ENCODE measurements at regions of chr3 and their contacts with region 1.

Region 1: GRCh38 chr3:79488407-79488806 is 279.4 kb downstream of the ROBO1 start:
- DNase-seq: no peak

Region 2: GRCh38 chr3:79406175-79406574 is 82.2 kb before region 1 on chr3:
- intact Hi-C with region 1: no loop called
- DNase-seq: no peak

Region 3: DNA sequence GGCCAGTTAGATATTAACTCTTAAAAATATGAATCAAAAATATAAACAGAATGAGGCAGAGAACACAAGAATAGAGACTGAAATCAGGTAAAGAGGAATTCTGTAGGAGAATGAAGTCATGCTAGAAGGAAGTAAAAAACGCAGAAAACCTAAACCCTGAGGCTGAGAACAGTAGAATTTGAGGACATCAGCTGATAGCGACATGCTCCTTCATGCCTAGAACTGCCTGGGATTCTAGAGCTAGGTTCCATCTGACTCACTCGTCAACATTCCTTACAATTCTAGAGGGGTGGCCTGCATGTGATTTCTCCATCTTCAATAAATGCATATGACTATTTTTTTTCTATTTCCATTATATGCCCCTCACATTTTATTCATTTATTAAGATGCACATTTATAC is 63.6 kb before region 1 on chr3:
- intact Hi-C with region 1: no loop called
- DNase-seq: no peak

Region 4: DNA sequence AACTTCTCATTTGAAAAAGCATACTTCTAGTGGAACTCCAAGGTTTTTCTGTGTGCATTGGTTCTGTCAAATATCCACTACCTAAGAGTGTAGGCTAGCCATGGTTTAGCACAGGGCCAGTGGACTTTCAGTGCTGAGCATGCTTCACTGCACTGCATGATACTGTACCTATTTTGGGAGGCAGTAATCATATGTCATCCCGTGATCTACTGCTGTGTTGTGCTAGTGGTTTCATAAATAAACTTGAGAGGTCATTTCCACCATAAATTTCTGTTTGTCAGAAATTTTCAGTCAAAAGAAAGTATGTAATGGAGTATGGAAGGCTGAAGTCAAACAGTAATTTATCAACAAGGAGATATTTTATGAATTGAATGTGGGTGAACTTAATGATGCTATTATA is 75.8 kb after region 1 on chr3:
- intact Hi-C with region 1: no loop called
- DNase-seq: no peak

Region 5: DNA sequence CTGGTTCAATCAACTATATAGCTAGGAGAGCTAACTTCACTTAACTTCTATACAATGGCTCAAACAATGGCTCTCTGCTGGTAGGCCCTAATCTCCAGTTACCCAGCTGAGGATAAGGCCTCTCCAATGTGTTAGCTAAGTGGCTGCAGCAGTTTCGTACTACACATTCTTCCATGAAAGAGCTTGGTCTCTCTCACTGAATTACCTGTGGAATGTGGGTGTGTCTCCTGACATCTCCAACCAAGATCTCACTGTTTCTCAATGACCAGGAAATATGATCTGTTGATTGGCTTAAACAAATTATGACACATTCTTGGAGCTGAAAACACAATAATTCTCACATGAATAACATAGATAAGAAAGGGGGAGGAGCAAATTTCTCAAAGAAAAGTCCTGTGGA is 449.2 kb after region 1 on chr3:
- intact Hi-C with region 1: no loop called
- DNase-seq: no peak

Region 6: DNA sequence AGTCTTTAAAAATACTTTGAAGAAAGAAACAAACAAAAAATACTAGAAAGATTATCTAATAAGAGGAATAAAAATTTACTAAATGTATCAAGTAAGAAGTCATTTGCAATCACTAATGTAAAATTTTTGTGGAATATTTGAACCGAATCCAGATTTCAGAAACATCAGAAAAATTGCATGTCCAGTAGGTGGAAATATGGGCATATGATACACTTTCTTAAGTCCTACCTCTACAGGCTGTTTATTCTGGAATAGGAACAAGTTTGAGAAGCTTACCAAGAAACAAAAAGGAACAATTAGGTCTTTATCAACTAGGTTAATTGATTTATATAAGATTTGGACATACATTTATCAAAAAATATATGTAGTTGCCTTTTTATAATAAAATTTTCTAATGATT is 572.3 kb after region 1 on chr3:
- intact Hi-C with region 1: loop called in 1 of 2 experiments (anchors 5 kb)
- DNase-seq: no peak

Measured in posterior vena cava (tissue), 2 donors.